Endothelial cell of umbilical vein (primary cell): ENCODE measurements at regions of chr2 and their contacts with region 1.

Region 1: DNA sequence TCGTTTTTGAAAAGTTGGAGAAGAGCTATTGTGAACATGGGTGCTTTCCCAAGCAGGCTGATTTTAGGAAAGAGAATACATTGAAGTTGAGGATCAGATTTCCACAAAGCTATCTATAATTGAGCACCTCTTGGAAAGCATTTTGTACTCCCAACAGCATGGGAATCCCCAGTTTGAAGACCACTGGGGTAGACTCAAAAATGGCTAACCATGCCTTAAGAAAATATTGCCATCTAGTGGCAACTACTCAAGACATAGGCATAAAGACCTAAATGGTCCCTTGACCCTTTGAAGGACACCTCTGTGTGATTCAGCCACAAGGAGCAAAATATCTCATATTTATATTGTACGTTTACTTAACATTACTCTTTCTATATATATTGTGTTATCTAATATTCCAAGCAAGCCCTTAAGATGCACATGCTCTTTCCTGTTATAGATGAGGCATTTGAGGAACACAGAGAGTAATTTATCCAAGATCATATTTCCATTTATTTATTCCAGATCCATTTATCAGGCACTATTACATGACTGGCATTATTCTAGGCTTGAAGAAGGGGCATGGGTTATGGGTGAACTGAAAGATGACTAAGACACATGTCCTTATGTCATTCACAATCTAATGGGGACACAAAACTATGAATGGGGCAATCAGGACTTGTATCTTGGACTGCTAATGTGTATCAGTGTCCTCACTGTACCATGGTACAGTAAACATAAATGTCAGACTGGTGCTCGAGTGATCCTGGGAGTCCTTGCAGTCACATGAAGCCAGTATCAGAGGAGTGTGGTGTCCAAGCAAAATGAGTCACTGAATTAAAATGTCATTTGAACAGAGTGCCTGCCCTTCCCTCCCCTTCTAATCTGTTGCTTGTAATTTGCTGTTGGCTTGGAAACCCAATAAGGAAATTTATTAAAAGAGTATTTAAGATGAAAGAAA is 121.0 kb upstream of the XPO1 start:
- DNase-seq: peak; percentile 44
- H3K4me3 ChIP-seq: no peak overlapping the region
- H3K27ac ChIP-seq: no peak overlapping the region
- H3K4me1 ChIP-seq: no peaks in the 10 kb centered on the region
- H3K27me3 ChIP-seq: no peaks in the 10 kb centered on the region
- CTCF ChIP-seq: peak; percentile 34 to 41
- POLR2A ChIP-seq: no peak

Region 2: GRCh38 chr2:61426267-61426897 is 232.7 kb before region 1 on chr2:
- CTCF ChIA-PET with region 1: no interaction called
- POLR2A ChIA-PET with region 1: no interaction called
- dilution Hi-C with region 1: no loop called
- intact Hi-C with region 1: no loop called
- DNase-seq: peak; percentile 36
- H3K4me3 ChIP-seq: no peak overlapping the region
- H3K27ac ChIP-seq: no peak overlapping the region
- H3K4me1 ChIP-seq: peaks cover 34% of the 10 kb centered on the region
- H3K27me3 ChIP-seq: no peaks in the 10 kb centered on the region
- CTCF ChIP-seq: peak; percentile 44 to 52
- POLR2A ChIP-seq: no peak

Region 3: DNA sequence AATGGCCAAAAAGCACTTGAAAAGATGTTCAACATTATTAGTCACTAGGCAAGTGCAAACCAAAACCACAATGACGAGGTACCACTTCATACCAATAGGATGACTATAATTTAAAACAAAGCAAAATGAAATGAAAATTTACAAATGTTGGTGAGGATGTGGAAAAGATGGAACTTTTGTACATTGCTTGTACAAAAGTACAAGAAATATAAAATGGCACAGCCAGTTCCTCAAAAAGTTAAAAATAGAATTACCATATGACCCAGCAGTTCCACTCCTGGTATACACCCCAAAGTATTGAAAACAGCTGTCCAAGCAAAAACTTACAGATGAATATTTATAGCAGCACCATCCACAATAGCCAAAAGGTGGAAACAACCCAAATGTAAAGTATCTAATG is 13.2 kb before region 1 on chr2:
- CTCF ChIA-PET with region 1: interaction called, 10 read pairs
- POLR2A ChIA-PET with region 1: interaction called, 6 read pairs
- dilution Hi-C with region 1: no loop called
- intact Hi-C with region 1: no loop called
- DNase-seq: no peak
- H3K4me3 ChIP-seq: no peak overlapping the region
- H3K27ac ChIP-seq: no peak overlapping the region
- H3K4me1 ChIP-seq: no peaks in the 10 kb centered on the region
- H3K27me3 ChIP-seq: no peaks in the 10 kb centered on the region
- CTCF ChIP-seq: no peak
- POLR2A ChIP-seq: no peak

Region 4: DNA sequence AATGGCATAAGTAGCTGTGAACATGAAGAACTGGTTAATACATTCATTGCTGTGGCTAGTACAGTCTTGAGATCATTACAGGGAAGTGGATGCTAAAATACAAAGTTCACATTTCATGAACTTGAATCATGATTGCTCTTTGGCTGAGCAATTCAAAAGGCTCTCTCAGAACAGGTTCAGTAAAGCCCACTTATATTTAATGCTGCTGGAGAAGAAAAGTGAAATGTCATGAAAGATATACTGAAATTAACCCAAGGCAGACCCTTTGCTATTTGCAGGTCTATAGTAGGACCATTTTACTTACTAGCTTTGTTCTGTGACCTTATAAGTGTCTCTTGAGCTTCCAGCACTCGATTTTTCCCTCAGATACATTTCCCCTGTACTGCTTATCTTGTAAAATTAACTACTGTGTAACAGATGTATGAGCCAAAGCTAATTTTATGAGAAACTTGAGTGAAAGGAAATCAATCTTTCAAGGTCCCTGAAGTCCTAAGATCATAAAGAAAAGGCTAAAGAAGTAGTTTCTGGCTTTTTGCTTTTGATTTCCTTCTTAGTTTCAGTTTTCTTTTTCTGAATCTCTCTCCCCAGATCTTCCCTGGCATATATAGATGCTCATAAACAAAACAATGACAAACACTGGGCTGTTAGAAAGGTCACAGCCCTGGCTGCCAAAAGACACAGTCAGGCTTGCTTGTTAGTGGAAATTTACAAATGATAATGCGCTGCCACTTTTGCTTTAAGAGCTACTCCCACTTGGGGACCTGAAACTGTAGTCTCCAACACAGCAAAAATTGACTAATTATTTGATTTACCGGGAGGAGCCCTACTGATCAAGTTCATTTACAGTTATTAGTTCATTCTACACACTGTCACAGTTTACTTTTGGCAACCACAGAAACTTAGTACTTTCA is 11.7 kb after region 1 on chr2:
- CTCF ChIA-PET with region 1: interaction called, 16 read pairs
- POLR2A ChIA-PET with region 1: no interaction called
- dilution Hi-C with region 1: no loop called
- intact Hi-C with region 1: no loop called
- DNase-seq: peak; percentile 78
- H3K4me3 ChIP-seq: peak overlapping the region in 2 of 3 experiments; percentile 14 to 23
- H3K27ac ChIP-seq: peak overlapping the region; percentile 34
- H3K4me1 ChIP-seq: peaks cover 7% of the 10 kb centered on the region
- H3K27me3 ChIP-seq: peaks cover 0 to 2% of the 10 kb centered on the region in 2 experiments
- CTCF ChIP-seq: no peak
- POLR2A ChIP-seq: no peak

Region 5: DNA sequence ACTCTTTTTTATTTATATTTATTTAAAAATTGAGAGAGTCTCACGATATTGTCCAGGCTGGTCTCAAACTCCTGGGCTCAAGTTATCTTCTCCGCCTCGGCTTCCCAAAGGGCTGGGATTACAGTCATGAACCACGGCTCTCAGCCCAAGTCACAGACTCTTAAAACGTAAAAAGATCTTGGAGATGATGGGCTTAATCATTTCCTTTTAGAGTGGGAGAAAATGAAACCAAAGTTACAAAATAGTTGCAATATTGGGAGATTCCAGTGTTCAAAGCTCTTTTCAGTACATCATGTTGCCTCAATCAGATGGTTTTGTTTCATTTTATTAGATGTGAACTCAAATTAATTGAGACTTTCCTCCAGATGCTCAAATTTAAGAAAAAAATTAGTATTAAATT is 30.5 kb after region 1 on chr2:
- CTCF ChIA-PET with region 1: no interaction called
- POLR2A ChIA-PET with region 1: no interaction called
- dilution Hi-C with region 1: no loop called
- intact Hi-C with region 1: no loop called
- DNase-seq: no peak
- H3K4me3 ChIP-seq: no peak overlapping the region
- H3K27ac ChIP-seq: no peak overlapping the region
- H3K4me1 ChIP-seq: no peaks in the 10 kb centered on the region
- H3K27me3 ChIP-seq: no peaks in the 10 kb centered on the region
- CTCF ChIP-seq: no peak
- POLR2A ChIP-seq: no peak

Region 6: GRCh38 chr2:61775956-61776570 is 117.0 kb after region 1 on chr2:
- CTCF ChIA-PET with region 1: no interaction called
- POLR2A ChIA-PET with region 1: no interaction called
- dilution Hi-C with region 1: no loop called
- intact Hi-C with region 1: no loop called
- DNase-seq: no peak
- H3K4me3 ChIP-seq: no peak overlapping the region
- H3K27ac ChIP-seq: no peak overlapping the region
- H3K4me1 ChIP-seq: no peaks in the 10 kb centered on the region
- H3K27me3 ChIP-seq: peaks cover 5 to 11% of the 10 kb centered on the region in 2 experiments
- CTCF ChIP-seq: no peak
- POLR2A ChIP-seq: no peak